ENCODE measurements at regions of chr12 and their contacts with region 1.

Region 1: DNA sequence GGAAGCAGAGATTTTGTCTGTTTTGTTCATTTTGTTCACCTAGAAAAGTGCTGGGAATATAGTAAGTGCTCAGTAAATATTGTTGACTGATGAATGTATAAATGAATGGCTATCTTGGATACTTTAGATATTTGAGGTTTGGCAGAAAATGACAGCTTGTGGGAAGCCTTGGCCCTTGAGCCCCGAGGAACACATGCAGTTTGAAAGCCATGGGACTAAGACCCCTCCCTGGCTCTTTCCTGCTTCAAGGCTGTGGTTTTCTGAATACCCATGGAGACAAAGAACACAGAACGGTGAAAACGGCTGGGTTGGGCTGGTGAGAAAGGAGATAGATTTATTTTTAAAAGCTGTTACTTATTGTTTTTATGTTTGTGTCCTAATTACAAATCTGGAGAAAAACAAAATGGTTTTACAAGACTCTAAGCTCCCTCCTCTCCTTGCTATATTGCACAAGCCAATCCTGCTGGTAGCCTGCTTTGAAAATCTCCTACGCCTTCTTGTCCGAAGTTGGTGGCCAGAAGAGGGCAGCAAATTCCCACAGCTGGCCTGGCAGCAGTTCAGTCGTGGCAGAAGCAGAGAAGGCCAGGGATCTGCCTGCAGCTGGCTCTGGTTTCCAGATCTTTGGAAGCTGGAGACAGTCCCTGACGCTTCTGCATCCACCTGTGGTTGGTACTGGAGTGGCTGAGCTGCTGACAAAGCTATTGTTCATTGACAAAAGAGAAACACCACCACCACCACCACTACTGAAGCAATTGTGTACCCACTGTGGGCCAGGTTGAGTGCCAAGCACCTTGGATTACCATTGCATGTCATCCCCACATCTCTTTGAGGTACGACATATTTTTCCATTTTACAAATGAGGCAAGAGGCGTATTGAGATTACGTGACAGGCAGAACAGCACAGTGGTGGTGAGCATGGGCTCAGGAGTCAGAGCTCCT is 5.2 kb upstream of the KRT85 start:
- DNase-seq: peak; percentile 89
- H3K4me3 ChIP-seq: no peak overlapping the region
- H3K27ac ChIP-seq: peak overlapping the region in 1 of 4 donors; percentile 34
- H3K4me1 ChIP-seq: peaks cover 0 to 15% (median 0%) of the 10 kb centered on the region in 4 donors
- H3K27me3 ChIP-seq: no peaks in the 10 kb centered on the region
- CTCF ChIP-seq: peak; percentile 65 to 80 (median 78)
- EP300 ChIP-seq: no peak
- POLR2A ChIP-seq: no peak

Region 2: GRCh38 chr12:52278541-52279421 is 93.7 kb before region 1 on chr12:
- intact Hi-C with region 1: no loop called
- DNase-seq: peak; percentile 89
- H3K4me3 ChIP-seq: peak overlapping the region in 3 of 4 donors; percentile 31 to 44 (median 38)
- H3K27ac ChIP-seq: peak overlapping the region; percentile 84 to 95 (median 86)
- H3K4me1 ChIP-seq: peaks cover 0 to 34% (median 32%) of the 10 kb centered on the region in 4 donors
- H3K27me3 ChIP-seq: no peaks in the 10 kb centered on the region
- CTCF ChIP-seq: peak; percentile 72 to 94 (median 91)
- EP300 ChIP-seq: no peak
- POLR2A ChIP-seq: no peak

Region 3: GRCh38 chr12:52506858-52507715 is 134.6 kb after region 1 on chr12:
- intact Hi-C with region 1: loop called (anchors 1 kb)
- DNase-seq: no peak
- H3K4me3 ChIP-seq: no peak overlapping the region
- H3K27ac ChIP-seq: no peak overlapping the region
- H3K4me1 ChIP-seq: peaks cover 0 to 9% (median 2%) of the 10 kb centered on the region in 4 donors
- H3K27me3 ChIP-seq: peaks cover 0 to 3% (median 0%) of the 10 kb centered on the region in 3 donors
- CTCF ChIP-seq: peak; percentile 25 to 56 (median 48)
- EP300 ChIP-seq: no peak
- POLR2A ChIP-seq: no peak

Region 4: GRCh38 chr12:52879394-52880351 is 507.2 kb after region 1 on chr12:
- intact Hi-C with region 1: loop called (anchors 1 kb)
- DNase-seq: peak; percentile 87
- H3K4me3 ChIP-seq: peak overlapping the region in 3 of 4 donors; percentile 7 to 35 (median 19)
- H3K27ac ChIP-seq: peak overlapping the region in 3 of 4 donors; percentile 15 to 61 (median 56)
- H3K4me1 ChIP-seq: peaks cover 0 to 25% (median 19%) of the 10 kb centered on the region in 4 donors
- H3K27me3 ChIP-seq: no peaks in the 10 kb centered on the region
- CTCF ChIP-seq: peak; percentile 72 to 82 (median 76)
- EP300 ChIP-seq: no peak
- POLR2A ChIP-seq: no peak

Region 5: GRCh38 chr12:52980693-52981423 is 608.4 kb after region 1 on chr12:
- intact Hi-C with region 1: loop called (anchors 10 kb)
- DNase-seq: peak; percentile 91
- H3K4me3 ChIP-seq: no peak overlapping the region
- H3K27ac ChIP-seq: no peak overlapping the region
- H3K4me1 ChIP-seq: no peaks in the 10 kb centered on the region
- H3K27me3 ChIP-seq: peaks cover 0 to 9% (median 0%) of the 10 kb centered on the region in 3 donors
- CTCF ChIP-seq: peak; percentile 92 to 99 (median 96)
- EP300 ChIP-seq: no peak
- POLR2A ChIP-seq: no peak